ENCODE measurements at regions of chr10 and their contacts with region 1.

Region 1: DNA sequence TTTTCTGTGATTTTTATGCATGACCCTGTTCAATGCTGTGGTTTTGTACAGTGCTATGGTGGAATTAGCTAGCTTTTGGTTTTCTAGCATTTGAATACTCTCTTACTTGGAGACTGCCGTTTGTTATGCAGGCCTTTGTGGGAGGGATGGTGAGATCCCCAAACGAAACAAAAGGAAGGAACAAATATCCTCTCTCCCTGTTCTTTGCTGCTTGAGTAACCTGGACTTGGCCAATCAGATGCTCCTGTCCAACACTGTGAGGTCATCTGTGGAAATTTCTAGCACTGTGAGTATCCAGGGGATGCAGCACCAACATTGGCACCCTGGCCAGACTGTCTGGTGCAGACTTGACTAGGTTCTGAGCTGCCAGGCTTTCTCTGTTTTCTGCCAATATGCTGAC is 314.4 kb downstream of the ANKRD30A start:
- DNase-seq: no peak
- ATAC-seq: no peak
- H3K4me3 ChIP-seq: no peak overlapping the region
- H3K4me3 Mint-ChIP-seq: no peak overlapping the region
- H3K27ac ChIP-seq: no peak overlapping the region
- H3K27ac Mint-ChIP-seq: no peak overlapping the region
- H3K4me1 ChIP-seq: no peaks in the 10 kb centered on the region
- H3K4me1 Mint-ChIP-seq: no peaks in the 10 kb centered on the region
- H3K27me3 ChIP-seq: no peaks in the 10 kb centered on the region
- H3K27me3 Mint-ChIP-seq: no peaks in the 10 kb centered on the region
- CTCF ChIP-seq: no peak

Region 2: GRCh38 chr10:37379991-37380390 is 59.8 kb before region 1 on chr10:
- CTCF ChIA-PET with region 1: no interaction called
- POLR2A ChIA-PET with region 1: no interaction called
- intact Hi-C with region 1: loop called in 1 of 2 experiments (anchors 10 kb)
- DNase-seq: no peak
- ATAC-seq: no peak
- H3K4me3 ChIP-seq: no peak overlapping the region
- H3K4me3 Mint-ChIP-seq: no peak overlapping the region
- H3K27ac ChIP-seq: no peak overlapping the region
- H3K27ac Mint-ChIP-seq: no peak overlapping the region
- H3K4me1 ChIP-seq: no peaks in the 10 kb centered on the region
- H3K4me1 Mint-ChIP-seq: no peaks in the 10 kb centered on the region
- H3K27me3 ChIP-seq: no peaks in the 10 kb centered on the region
- H3K27me3 Mint-ChIP-seq: no peaks in the 10 kb centered on the region
- CTCF ChIP-seq: no peak